ENCODE measurements at regions of chr19 and their contacts with region 1.

Region 1: GRCh38 chr19:506404-507285 is 652 bp upstream of the TPGS1 start:
- DNase-seq: peak; percentile 97
- ATAC-seq: peak; percentile 68
- H3K4me3 Mint-ChIP-seq: peak overlapping the region; percentile 83
- H3K27ac Mint-ChIP-seq: peak overlapping the region; percentile 99
- H3K4me1 Mint-ChIP-seq: peaks cover 46% of the 10 kb centered on the region
- H3K27me3 Mint-ChIP-seq: no peaks in the 10 kb centered on the region

Region 2: GRCh38 chr19:488505-489417 is 17.9 kb before region 1 on chr19:
- CTCF ChIA-PET with region 1: interaction called, 23 read pairs
- DNase-seq: peak; percentile 93
- ATAC-seq: peak; percentile 86
- H3K4me3 Mint-ChIP-seq: peak overlapping the region; percentile 75
- H3K27ac Mint-ChIP-seq: peak overlapping the region; percentile 82
- H3K4me1 Mint-ChIP-seq: peaks cover 10% of the 10 kb centered on the region
- H3K27me3 Mint-ChIP-seq: peaks cover 13% of the 10 kb centered on the region

Region 3: GRCh38 chr19:495402-496186 is 11.1 kb before region 1 on chr19:
- CTCF ChIA-PET with region 1: interaction called, 23 read pairs
- DNase-seq: peak; percentile 66
- ATAC-seq: peak; percentile 40
- H3K4me3 Mint-ChIP-seq: no peak overlapping the region
- H3K27ac Mint-ChIP-seq: no peak overlapping the region
- H3K4me1 Mint-ChIP-seq: peaks cover 2% of the 10 kb centered on the region
- H3K27me3 Mint-ChIP-seq: peaks cover 18% of the 10 kb centered on the region

Region 4: GRCh38 chr19:522726-523125 is 16.1 kb after region 1 on chr19:
- CTCF ChIA-PET with region 1: interaction called, 94 read pairs
- DNase-seq: no peak
- ATAC-seq: no peak
- H3K4me3 Mint-ChIP-seq: no peak overlapping the region
- H3K27ac Mint-ChIP-seq: no peak overlapping the region
- H3K4me1 Mint-ChIP-seq: peaks cover 5% of the 10 kb centered on the region
- H3K27me3 Mint-ChIP-seq: peaks cover 3% of the 10 kb centered on the region

Region 5: GRCh38 chr19:531009-531752 is 24.5 kb after region 1 on chr19:
- CTCF ChIA-PET with region 1: interaction called, 94 read pairs
- DNase-seq: peak; percentile 90
- ATAC-seq: peak; percentile 83
- H3K4me3 Mint-ChIP-seq: peak overlapping the region; percentile 77
- H3K27ac Mint-ChIP-seq: peak overlapping the region; percentile 83
- H3K4me1 Mint-ChIP-seq: peaks cover 18% of the 10 kb centered on the region
- H3K27me3 Mint-ChIP-seq: peaks cover 3% of the 10 kb centered on the region

Region 6: GRCh38 chr19:670609-671075 is 164.0 kb after region 1 on chr19:
- CTCF ChIA-PET with region 1: no interaction called
- DNase-seq: no peak
- ATAC-seq: no peak
- H3K4me3 Mint-ChIP-seq: no peak overlapping the region
- H3K27ac Mint-ChIP-seq: no peak overlapping the region
- H3K4me1 Mint-ChIP-seq: no peaks in the 10 kb centered on the region
- H3K27me3 Mint-ChIP-seq: peaks cover 27% of the 10 kb centered on the region